Gastrocnemius medialis (tissue), 4 donors: ENCODE measurements at regions of chr11 and their contacts with region 1.

Region 1: DNA sequence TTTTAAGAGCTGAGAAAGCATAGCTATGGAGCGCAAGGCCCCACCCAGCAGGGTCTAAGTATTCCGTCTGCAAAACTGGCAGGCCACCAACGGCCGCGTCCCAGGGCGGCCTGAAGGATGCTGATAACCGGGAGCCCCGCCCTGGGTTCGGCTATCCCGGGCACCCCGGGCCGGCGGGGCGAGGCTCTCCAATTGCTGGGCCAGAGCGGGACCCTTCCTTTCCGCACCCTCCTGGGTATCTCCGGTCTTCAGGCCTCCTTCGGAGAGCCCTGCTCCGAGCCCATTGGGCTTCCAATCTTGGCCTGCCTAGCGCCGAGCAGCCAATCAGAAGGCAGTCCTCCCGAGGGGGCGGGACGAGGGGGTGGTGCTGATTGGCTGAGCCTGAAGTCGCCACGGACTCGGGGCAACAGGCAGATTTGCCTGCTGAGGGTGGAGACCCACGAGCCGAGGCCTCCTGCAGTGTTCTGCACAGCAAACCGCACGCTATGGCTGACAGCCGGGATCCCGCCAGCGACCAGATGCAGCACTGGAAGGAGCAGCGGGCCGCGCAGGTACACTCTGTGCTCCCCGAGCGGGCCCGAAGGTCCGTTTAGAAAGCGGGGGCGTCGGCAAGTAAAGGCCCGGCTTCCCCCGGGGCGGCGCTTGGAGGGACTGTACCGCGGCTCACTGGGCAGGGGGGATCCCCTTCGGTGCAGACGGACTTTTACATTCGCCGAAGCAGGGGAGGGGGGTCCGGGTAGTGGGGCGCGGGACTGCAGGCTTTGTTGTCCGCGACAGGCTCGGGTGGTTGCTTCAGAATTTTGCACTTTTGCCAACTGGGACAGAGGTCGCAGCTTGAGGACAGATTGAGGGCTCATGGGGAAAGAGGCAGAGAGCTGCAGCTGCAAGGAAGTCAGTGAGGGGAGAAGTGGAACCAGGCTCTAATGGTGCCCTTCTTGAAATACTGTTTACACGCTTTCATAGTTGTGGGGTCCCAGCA is at the start of gene CAT:
- DNase-seq: peak; percentile 98
- ATAC-seq: peak; percentile 96
- H3K4me3 ChIP-seq: peak within 1 kb of the TSS; percentile 85 to 98 (median 89)
- H3K27ac ChIP-seq: peak within 1 kb of the TSS; percentile 95 to 96 (median 96)
- H3K4me1 ChIP-seq: peaks cover 25 to 50% of the 10 kb centered on the region in 2 donors
- H3K27me3 ChIP-seq: no peaks in the 10 kb centered on the region
- CTCF ChIP-seq: no peak
- POLR2A ChIP-seq: peak; percentile 78 to 79
- total RNA-seq, gene CAT: 107 to 150 (median 128) TPM

Region 2: GRCh38 chr11:34105079-34105956 is 333.5 kb before region 1 on chr11 and contains the start of gene NAT10:
- in situ Hi-C with region 1: no loop called
- intact Hi-C with region 1: loop called (anchors 5 kb)
- DNase-seq: peak; percentile 97 to 99
- ATAC-seq: peak; percentile 95 to 98
- H3K4me3 ChIP-seq: peak within 1 kb of the TSS; percentile 71 to 97 (median 82)
- H3K27ac ChIP-seq: peak within 1 kb of the TSS; percentile 84 to 94 (median 90)
- H3K4me1 ChIP-seq: peaks cover 19 to 22% of the 10 kb centered on the region in 2 donors
- H3K27me3 ChIP-seq: no peaks in the 10 kb centered on the region
- CTCF ChIP-seq: peak in 4 of 5 experiments; percentile 19 to 44 (median 28)
- POLR2A ChIP-seq: peak; percentile 70 to 74
- total RNA-seq, gene NAT10: 17.2 to 27.7 (median 19.4) TPM

Region 3: DNA sequence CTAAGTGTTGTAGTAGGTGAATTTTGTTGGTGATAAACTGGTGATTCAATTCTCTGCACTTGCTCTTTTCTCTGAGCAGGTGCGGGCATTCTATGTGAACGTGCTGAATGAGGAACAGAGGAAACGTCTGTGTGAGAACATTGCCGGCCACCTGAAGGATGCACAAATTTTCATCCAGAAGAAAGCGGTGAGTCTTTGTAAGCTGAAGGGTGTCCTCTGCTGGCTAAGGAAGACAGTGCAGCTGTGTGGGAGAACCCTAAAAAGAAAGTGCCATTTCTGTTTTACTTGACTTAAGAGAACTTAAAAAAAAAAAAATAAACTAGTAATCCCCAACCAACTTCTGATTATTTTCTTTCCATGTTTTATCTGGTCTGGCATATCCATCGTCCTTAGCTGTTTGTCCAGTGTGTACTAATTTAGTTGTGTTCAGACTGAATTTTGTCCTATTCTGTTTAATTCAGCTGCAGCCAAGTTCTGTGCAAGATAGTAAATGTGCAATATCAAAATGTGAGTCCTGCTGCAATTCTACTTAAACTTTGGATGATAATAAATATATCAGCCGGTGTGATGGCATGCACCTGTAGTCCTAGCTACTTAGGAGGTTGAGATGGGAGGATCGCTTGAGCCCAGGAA is 29.5 kb after region 1 on chr11:
- in situ Hi-C with region 1: no loop called
- intact Hi-C with region 1: loop called (anchors 2 kb)
- DNase-seq: no peak
- ATAC-seq: no peak
- H3K4me3 ChIP-seq: no peak overlapping the region
- H3K27ac ChIP-seq: no peak overlapping the region
- H3K4me1 ChIP-seq: no peaks in the 10 kb centered on the region
- H3K27me3 ChIP-seq: no peaks in the 10 kb centered on the region
- CTCF ChIP-seq: peak in 4 of 5 experiments; percentile 39 to 61 (median 52)
- POLR2A ChIP-seq: no peak